KBM-7 (cell line): ENCODE measurements at regions of chr11 and their contacts with region 1.

Region 1: GRCh38 chr11:70183483-70184169 is 19.5 kb upstream of the FADD start:
- DNase-seq: no peak

Region 2: DNA sequence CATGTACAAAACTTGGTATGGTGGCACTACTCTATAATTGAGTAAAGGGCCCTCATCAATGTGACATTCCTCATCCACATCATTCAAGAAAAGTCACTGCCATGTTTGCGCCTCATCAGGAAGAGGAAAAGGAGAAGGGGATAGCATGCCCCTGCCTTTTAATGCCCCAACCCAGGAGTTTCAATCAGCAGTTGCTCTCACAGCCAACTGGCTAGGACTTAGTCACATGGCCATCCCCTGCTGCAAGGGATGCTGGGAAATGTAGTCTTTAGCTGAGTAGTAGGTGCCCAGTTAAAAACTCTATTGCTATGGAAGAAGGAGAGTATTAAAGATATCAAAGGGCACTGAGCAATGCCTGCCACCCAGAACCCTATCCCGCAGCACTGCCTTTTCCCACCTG is 553.6 kb before region 1 on chr11:
- in situ Hi-C with region 1: no loop called
- DNase-seq: no peak

Region 3: GRCh38 chr11:69732910-69733309 is 450.7 kb before region 1 on chr11:
- in situ Hi-C with region 1: no loop called
- DNase-seq: no peak

Region 4: GRCh38 chr11:69925366-69926196 is 258.0 kb before region 1 on chr11:
- in situ Hi-C with region 1: loop called (anchors 10 kb)
- DNase-seq: no peak

Region 5: GRCh38 chr11:70281156-70281609 is 97.6 kb after region 1 on chr11:
- in situ Hi-C with region 1: no loop called
- DNase-seq: no peak

Region 6: DNA sequence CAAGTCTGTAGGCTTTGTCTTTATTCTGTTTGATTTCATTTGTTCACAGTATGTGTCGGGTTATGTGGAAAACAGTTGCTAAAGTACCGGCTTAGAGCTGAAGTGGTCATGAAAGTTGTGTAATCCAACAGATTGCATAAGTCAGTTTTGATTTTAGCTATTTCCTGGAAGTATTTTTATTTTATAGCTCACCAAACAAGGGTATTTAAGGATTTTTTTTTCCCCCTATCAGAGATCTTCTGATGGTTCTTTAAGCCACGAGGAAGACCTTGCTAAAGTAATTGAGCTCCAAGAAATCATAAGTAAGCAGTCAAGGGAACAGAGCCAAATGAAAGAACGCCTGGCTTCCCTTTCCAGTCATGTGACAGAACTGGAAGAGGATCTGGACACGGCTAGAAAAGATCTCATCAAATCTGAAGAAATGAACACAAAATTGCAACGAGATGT is 142.8 kb after region 1 on chr11:
- in situ Hi-C with region 1: no loop called
- DNase-seq: no peak